HEK293 (cell line): ENCODE measurements at regions of chr3 and their contacts with region 1.

Region 1: GRCh38 chr3:41198950-41199865 is at the start of gene CTNNB1:
- H3K4me3 ChIP-seq: peak within 1 kb of the TSS; percentile 99
- H3K27ac ChIP-seq: peak within 1 kb of the TSS; percentile 92
- H3K4me1 ChIP-seq: peaks cover 6% of the 10 kb centered on the region; the same call in 1 of the 2 replicates
- CTCF ChIP-seq: no peak

Region 2: GRCh38 chr3:40745381-40746106 is 453.7 kb before region 1 on chr3:
- CTCF ChIA-PET with region 1: no interaction called
- POLR2A ChIA-PET with region 1: no interaction called
- H3K4me3 ChIP-seq: no peak overlapping the region
- H3K27ac ChIP-seq: no peak overlapping the region
- H3K4me1 ChIP-seq: no peaks in the 10 kb centered on the region
- CTCF ChIP-seq: no peak

Region 3: GRCh38 chr3:41117398-41117870 is 81.8 kb before region 1 on chr3:
- CTCF ChIA-PET with region 1: no interaction called
- POLR2A ChIA-PET with region 1: interaction called, 11 read pairs
- H3K4me3 ChIP-seq: no peak overlapping the region
- H3K27ac ChIP-seq: no peak overlapping the region
- H3K4me1 ChIP-seq: peaks cover 3% of the 10 kb centered on the region; the same call in 1 of the 2 replicates
- CTCF ChIP-seq: no peak

Region 4: DNA sequence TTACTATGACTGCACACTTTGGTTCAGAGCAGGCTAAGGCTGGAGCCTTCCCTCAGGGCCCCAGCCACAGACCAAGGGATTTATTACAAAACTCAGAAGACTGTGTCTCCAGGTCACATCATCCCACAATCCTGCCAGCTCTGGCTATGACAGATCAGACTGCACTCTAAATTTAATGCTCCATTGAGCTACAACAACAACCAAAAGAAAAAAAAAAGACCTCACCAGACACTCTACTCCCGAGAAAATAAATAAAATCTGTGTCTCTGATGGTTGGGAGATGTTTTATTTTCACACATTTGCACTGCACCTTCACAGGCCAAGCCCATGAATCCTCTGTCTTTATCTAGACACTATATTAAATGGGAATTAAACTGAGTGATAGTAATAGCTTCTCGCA is 50.7 kb before region 1 on chr3:
- CTCF ChIA-PET with region 1: no interaction called
- POLR2A ChIA-PET with region 1: interaction called, 14 read pairs
- H3K4me3 ChIP-seq: no peak overlapping the region
- H3K27ac ChIP-seq: peak overlapping the region; percentile 30
- H3K4me1 ChIP-seq: peaks cover 2% of the 10 kb centered on the region
- CTCF ChIP-seq: no peak

Region 5: DNA sequence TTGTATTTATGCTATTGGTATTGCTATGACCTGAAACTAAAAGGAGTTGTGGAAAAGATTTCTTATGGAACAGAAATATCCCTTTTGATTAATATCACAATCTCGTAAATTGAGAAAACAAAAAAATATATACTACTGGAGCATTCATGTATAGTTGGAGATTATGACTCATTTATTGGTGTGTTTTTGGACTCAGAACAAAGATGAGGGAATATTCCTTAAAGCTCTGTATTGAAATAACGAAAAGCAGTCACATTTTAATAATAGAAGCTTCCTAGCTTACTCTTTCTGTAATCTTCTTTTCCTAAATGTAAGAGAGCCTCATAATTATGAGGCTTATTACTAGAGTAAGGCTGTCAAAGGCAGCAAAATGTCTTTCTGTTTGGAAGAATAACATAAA is 14.4 kb after region 1 on chr3:
- CTCF ChIA-PET with region 1: interaction called, 4 read pairs
- POLR2A ChIA-PET with region 1: interaction called, 24 read pairs
- H3K4me3 ChIP-seq: no peak overlapping the region
- H3K27ac ChIP-seq: no peak overlapping the region
- H3K4me1 ChIP-seq: peaks cover 9% of the 10 kb centered on the region
- CTCF ChIP-seq: no peak

Region 6: DNA sequence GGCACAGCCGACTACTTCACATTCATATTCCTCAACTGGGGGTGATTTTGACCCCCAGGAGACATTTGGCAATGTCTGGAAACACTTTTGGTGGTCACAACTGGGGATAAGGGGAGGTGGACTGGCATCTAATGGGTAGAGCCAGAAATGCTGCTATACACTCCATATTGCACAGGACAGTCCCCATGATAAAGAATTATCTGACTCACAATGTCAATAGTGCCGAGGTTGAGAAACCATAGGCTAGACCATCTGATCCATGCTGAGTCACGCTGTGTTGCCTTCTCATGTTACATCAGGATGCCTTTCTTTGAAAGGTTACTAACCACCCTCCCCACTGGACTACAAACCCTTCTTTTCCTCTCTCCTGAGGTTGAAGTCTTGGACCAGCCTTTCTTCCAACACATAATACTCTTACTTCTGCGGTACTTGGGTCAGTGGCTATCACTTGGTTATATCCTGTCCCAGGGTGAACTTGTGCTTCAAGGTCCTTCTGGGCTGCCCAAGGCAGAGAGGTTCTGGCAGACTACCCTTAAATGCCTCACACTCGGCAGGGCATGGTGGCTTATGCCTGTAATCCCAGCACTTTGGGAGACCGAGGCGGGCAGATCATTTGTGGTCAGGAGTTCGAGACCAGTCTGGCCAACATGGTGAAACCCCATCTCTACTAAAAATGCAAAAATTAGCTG is 68.9 kb after region 1 on chr3:
- CTCF ChIA-PET with region 1: no interaction called
- POLR2A ChIA-PET with region 1: no interaction called
- H3K4me3 ChIP-seq: no peak overlapping the region
- H3K27ac ChIP-seq: no peak overlapping the region
- H3K4me1 ChIP-seq: no peaks in the 10 kb centered on the region
- CTCF ChIP-seq: no peak